ENCODE measurements at regions of chr1 and their contacts with region 1.

Region 1: DNA sequence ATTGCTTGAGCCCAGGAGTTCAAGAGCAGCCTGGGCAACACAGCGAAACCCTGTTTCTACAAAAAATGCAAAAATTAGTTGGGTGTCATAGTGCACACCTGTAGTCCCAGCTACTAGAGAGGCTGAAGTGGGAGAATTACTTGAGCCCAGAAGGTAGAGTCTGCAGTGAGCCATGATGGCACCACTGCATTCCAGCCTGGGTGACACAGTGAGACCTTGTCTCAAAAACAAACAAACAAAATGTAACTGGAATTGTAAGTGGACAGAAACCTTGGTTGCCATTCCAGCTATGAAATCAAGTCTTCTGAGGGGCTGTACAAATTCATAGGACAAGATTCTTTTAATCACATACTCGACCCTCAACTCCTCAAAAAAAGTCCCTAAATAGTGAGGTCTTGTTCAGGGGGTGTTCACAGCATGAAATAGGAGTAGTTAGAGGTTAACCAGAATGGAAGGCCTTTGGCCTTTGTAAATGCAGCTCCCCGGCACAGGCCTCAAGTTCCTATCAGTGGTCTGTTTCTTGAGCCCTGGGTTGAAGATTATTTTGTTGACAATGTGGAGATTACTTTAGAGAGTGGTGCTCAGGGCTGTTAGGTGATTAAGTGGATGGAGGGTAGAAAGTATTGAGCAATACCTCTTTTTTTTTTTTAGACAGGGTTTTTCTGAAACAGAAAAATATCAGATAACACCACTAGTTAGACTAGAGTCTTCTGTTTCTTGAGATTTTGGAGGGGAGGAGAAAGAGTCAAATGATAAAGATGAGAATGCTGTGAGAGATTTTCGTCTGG is 138.7 kb upstream of the ZNF648 start:
- DNase-seq: peak; percentile 75 to 82
- H3K4me3 ChIP-seq: no peak overlapping the region
- H3K4me3 Mint-ChIP-seq: peak overlapping the region; percentile 21
- H3K27ac Mint-ChIP-seq: peak overlapping the region; percentile 13
- H3K4me1 ChIP-seq: peaks cover 44% of the 10 kb centered on the region
- H3K4me1 Mint-ChIP-seq: peaks cover 26% of the 10 kb centered on the region
- H3K27me3 ChIP-seq: no peaks in the 10 kb centered on the region
- H3K27me3 Mint-ChIP-seq: no peaks in the 10 kb centered on the region
- CTCF ChIP-seq: no peak

Region 2: GRCh38 chr1:182143154-182143657 is 57.0 kb before region 1 on chr1:
- CTCF ChIA-PET with region 1: interaction called, 6 read pairs
- POLR2A ChIA-PET with region 1: no interaction called
- intact Hi-C with region 1: loop called (anchors 5 kb)
- DNase-seq: peak; percentile 87 to 92
- H3K4me3 ChIP-seq: no peak overlapping the region
- H3K4me3 Mint-ChIP-seq: no peak overlapping the region
- H3K27ac Mint-ChIP-seq: peak overlapping the region; percentile 63
- H3K4me1 ChIP-seq: peaks cover 34% of the 10 kb centered on the region
- H3K4me1 Mint-ChIP-seq: peaks cover 48% of the 10 kb centered on the region
- H3K27me3 ChIP-seq: no peaks in the 10 kb centered on the region
- H3K27me3 Mint-ChIP-seq: no peaks in the 10 kb centered on the region
- CTCF ChIP-seq: peak; percentile 92 to 97

Region 3: GRCh38 chr1:182249201-182249676 is 49.0 kb after region 1 on chr1:
- CTCF ChIA-PET with region 1: no interaction called
- POLR2A ChIA-PET with region 1: no interaction called
- intact Hi-C with region 1: loop called (anchors 1 kb)
- DNase-seq: peak; percentile 80 to 88
- H3K4me3 ChIP-seq: no peak overlapping the region
- H3K4me3 Mint-ChIP-seq: peak overlapping the region; percentile 44
- H3K27ac Mint-ChIP-seq: peak overlapping the region; percentile 59
- H3K4me1 ChIP-seq: peaks cover 25% of the 10 kb centered on the region
- H3K4me1 Mint-ChIP-seq: peaks cover 22% of the 10 kb centered on the region
- H3K27me3 ChIP-seq: no peaks in the 10 kb centered on the region
- H3K27me3 Mint-ChIP-seq: no peaks in the 10 kb centered on the region
- CTCF ChIP-seq: no peak

Region 4: GRCh38 chr1:182259229-182259872 is 59.1 kb after region 1 on chr1:
- CTCF ChIA-PET with region 1: no interaction called
- POLR2A ChIA-PET with region 1: no interaction called
- intact Hi-C with region 1: no loop called
- DNase-seq: no peak
- H3K4me3 ChIP-seq: no peak overlapping the region
- H3K4me3 Mint-ChIP-seq: no peak overlapping the region
- H3K27ac Mint-ChIP-seq: no peak overlapping the region
- H3K4me1 ChIP-seq: no peaks in the 10 kb centered on the region
- H3K4me1 Mint-ChIP-seq: no peaks in the 10 kb centered on the region
- H3K27me3 ChIP-seq: no peaks in the 10 kb centered on the region
- H3K27me3 Mint-ChIP-seq: no peaks in the 10 kb centered on the region
- CTCF ChIP-seq: no peak

Region 5: DNA sequence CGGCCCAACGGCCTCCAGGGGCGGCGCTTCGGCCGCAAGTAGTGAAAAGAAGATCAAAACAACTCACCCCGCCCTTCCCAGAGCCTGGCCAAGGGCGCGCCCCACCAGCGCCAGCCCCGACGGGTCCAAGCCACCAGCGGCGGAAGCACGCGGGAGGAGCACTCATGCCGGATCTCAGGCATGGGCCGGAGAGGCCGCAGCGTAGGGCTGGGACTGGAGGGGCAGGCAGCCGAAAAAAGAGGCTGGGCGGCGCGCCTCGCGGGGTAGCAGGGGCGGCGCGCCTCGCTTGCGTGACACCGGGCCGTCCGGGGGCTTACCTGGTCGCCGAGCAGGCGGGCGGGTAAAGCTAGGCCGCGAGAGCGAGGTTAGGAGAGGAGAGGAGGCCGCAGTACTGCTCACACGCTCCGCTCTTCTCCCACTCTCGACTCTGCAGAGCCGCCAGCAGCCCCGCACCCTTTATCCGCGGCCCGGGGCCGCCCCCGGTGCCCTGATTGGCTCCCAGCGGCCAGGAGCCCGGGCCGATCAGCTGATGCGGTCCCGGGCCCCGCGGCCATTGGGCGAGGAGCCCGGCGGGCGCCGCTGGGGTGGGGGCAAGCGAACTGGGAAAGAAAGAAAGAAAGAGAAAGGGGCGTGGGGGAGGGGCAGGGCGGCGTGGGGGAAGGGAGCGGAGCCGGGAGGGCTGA is 191.3 kb after region 1 on chr1 and contains the start of gene GLUL:
- CTCF ChIA-PET with region 1: no interaction called
- POLR2A ChIA-PET with region 1: interaction called, 17 read pairs
- intact Hi-C with region 1: loop called (anchors 2 kb)
- DNase-seq: peak; percentile 95 to 98
- H3K4me3 ChIP-seq: peak within 1 kb of the TSS; percentile 95
- H3K4me3 Mint-ChIP-seq: peak within 1 kb of the TSS; percentile 99
- H3K27ac Mint-ChIP-seq: peak within 1 kb of the TSS; percentile 97
- H3K4me1 ChIP-seq: peaks cover 24% of the 10 kb centered on the region
- H3K4me1 Mint-ChIP-seq: peaks cover 22% of the 10 kb centered on the region
- H3K27me3 ChIP-seq: no peaks in the 10 kb centered on the region
- H3K27me3 Mint-ChIP-seq: no peaks in the 10 kb centered on the region
- CTCF ChIP-seq: no peak
- total RNA-seq, gene GLUL: 394 TPM in 2 replicates

Region 6: GRCh38 chr1:182430263-182431068 is 230.2 kb after region 1 on chr1:
- CTCF ChIA-PET with region 1: no interaction called
- POLR2A ChIA-PET with region 1: no interaction called
- intact Hi-C with region 1: no loop called
- DNase-seq: no peak
- H3K4me3 ChIP-seq: no peak overlapping the region
- H3K4me3 Mint-ChIP-seq: no peak overlapping the region
- H3K27ac Mint-ChIP-seq: no peak overlapping the region
- H3K4me1 ChIP-seq: peaks cover 9% of the 10 kb centered on the region
- H3K4me1 Mint-ChIP-seq: peaks cover 11% of the 10 kb centered on the region
- H3K27me3 ChIP-seq: no peaks in the 10 kb centered on the region
- H3K27me3 Mint-ChIP-seq: no peaks in the 10 kb centered on the region
- CTCF ChIP-seq: no peak